ENCODE measurements at regions of chr3 and their contacts with region 1.

Region 1: GRCh38 chr3:12135029-12135657 is 23.6 kb downstream of the TIMP4 start:
- DNase-seq: peak; percentile 65
- ATAC-seq: peak; percentile 89
- H3K4me3 Mint-ChIP-seq: no peak overlapping the region
- H3K27ac Mint-ChIP-seq: no peak overlapping the region
- H3K4me1 Mint-ChIP-seq: peaks cover 3% of the 10 kb centered on the region
- H3K27me3 Mint-ChIP-seq: peaks cover 27% of the 10 kb centered on the region

Region 2: DNA sequence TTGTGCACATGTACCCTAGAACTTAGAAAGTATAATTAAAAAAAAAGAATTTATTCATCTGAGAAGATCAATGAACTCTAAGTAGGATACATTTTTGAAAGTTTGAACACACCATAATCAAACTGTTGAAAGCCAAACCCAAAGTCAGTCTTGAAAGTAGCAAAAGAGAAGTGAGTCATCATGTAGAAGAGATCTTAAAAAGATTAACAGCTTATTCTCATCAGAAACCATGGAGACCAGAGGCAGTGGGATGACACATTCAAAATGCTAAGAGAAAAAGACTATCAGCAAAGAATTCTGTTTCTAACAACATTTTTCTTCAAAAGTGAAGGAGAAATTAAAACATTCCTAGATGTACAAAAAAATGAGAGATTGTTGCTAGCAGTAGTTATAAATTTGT is 37.2 kb before region 1 on chr3:
- CTCF ChIA-PET with region 1: no interaction called
- POLR2A ChIA-PET with region 1: no interaction called
- DNase-seq: no peak
- ATAC-seq: no peak
- H3K4me3 Mint-ChIP-seq: no peak overlapping the region
- H3K27ac Mint-ChIP-seq: no peak overlapping the region
- H3K4me1 Mint-ChIP-seq: no peaks in the 10 kb centered on the region
- H3K27me3 Mint-ChIP-seq: peaks cover 12% of the 10 kb centered on the region

Region 3: GRCh38 chr3:12175844-12176453 is 40.8 kb after region 1 on chr3:
- CTCF ChIA-PET with region 1: interaction called, 60 read pairs
- POLR2A ChIA-PET with region 1: no interaction called
- DNase-seq: peak; percentile 28
- ATAC-seq: peak; percentile 64
- H3K4me3 Mint-ChIP-seq: no peak overlapping the region
- H3K27ac Mint-ChIP-seq: no peak overlapping the region
- H3K4me1 Mint-ChIP-seq: peaks cover 2% of the 10 kb centered on the region
- H3K27me3 Mint-ChIP-seq: no peaks in the 10 kb centered on the region

Region 4: DNA sequence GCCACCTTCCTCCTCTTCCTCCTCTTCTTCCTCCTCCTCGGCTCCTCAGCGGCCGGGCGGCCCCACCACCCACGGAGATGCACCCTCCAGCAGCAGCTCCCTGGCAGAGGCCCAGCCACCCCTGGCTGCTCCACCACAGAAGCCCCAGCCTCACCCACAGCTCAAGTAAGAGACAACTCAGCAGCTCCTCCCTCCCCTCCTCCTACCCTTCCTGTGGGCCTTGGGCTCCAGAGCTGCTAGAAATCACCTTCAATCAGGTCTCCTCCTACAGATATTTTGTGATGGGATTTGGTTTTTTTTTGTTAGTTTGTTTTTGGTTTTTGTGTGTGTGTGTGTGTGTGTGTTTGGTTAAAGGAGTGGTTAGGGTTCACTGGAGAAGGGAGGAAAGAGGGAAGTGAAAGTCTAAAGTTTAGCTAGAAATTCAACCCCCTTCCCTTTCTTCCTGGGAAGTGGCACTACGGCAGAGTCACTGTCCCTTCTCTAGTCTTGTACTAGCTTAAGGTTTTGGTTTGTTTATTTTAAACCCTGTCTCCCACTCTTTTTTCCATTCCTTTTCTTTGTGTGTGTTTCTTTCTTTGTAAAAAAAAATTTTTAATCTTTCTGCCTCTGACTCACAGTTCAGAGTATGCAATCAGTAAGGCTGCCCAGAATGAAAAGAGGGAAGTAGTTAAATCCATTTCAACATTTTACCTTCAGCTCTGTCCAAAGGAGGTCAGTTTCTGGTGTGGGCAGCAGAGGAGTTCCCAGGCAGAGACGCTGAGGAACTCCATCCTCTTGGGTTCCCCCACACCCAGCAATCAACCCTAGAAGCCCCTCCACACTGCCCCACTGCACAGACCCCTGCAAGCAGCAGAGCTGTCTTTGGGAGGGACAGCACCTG is 52.5 kb after region 1 on chr3:
- CTCF ChIA-PET with region 1: interaction called, 11 read pairs
- POLR2A ChIA-PET with region 1: no interaction called
- DNase-seq: peak; percentile 63
- ATAC-seq: peak; percentile 71
- H3K4me3 Mint-ChIP-seq: no peak overlapping the region
- H3K27ac Mint-ChIP-seq: peak overlapping the region; percentile 56
- H3K4me1 Mint-ChIP-seq: peaks cover 19% of the 10 kb centered on the region
- H3K27me3 Mint-ChIP-seq: no peaks in the 10 kb centered on the region

Measured in activated CD8-positive, alpha-beta T cell treated with anti-CD3 and anti-CD28 coated beads, Interleukin-2, amount 10 ng/mL, durations not matched to agents 7 days and 5 days (primary cell).